Cardiac septum (tissue), 1 donor: ENCODE measurements at regions of chr17 and their contacts with region 1.

Region 1: GRCh38 chr17:76623271-76624146 is 20.0 kb downstream of the ST6GALNAC1 start:
- DNase-seq: peak; percentile 91

Region 2: DNA sequence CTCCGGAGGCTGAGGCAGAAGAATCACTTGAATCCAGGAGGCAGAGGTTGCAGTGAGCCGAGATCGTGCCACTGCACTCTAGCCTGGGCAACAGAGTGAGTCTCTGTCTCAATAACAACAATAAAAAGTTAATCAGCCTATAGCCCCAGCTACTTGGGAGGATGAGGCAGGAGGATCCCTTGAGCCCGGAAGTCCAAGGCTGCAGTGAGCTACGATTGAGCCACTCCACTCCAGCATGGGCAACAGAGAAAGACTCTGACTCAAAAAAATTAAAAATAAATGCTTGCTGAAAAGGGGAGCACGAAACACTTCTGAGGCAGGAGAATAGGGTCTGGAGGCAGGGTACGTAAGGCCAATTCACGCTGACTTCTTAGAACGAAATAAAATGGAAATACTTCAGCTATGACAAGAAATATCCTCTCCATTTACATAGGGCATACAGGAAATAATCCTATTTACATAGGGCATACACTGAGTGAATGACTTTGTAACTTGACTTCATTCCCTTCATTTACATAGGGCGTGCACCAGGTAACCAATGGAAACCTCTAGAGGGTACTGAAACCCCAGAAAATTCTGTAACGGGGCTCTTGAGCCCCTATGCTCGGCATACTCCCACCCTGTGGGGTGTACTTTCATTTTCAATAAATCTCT is 266.6 kb before region 1 on chr17:
- intact Hi-C with region 1: no loop called
- DNase-seq: no peak

Region 3: GRCh38 chr17:76557368-76558197 is 65.9 kb before region 1 on chr17:
- intact Hi-C with region 1: loop called (anchors 5 kb)
- DNase-seq: peak; percentile 97

Region 4: GRCh38 chr17:76671123-76671911 is 47.8 kb after region 1 on chr17:
- intact Hi-C with region 1: loop called (anchors 10 kb)
- DNase-seq: peak; percentile 100